ENCODE measurements at regions of chr9 and their contacts with region 1.

Region 1: GRCh38 chr9:72952914-72953313 is at the start of gene ALDH1A1:
- DNase-seq: peak in 1 of 2 experiments; percentile 91
- ATAC-seq: peak; percentile 64 to 65; a peak in 5 of 6 replicates
- H3K4me3 ChIP-seq: peak within 1 kb of the TSS; percentile 67
- H3K27ac ChIP-seq: peak within 1 kb of the TSS; percentile 90 to 91
- H3K4me1 ChIP-seq: peaks cover 23% of the 10 kb centered on the region
- CTCF ChIP-seq: no peak
- EP300 ChIP-seq: no peak; a peak in 1 of 5 replicates
- POLR2A ChIP-seq: peak; percentile 84
- RAD21 ChIP-seq: 0 out of 5 replicates have a peak, but pooled peaks of 1 of the 2 experiments have one; percentile 9
- polyA plus RNA-seq, gene ALDH1A1: 6,119 and 8,617 TPM in 2 replicates

Region 2: GRCh38 chr9:72937545-72937944 is 15.4 kb before region 1 on chr9:
- CTCF ChIA-PET with region 1: interaction called, 9 read pairs
- POLR2A ChIA-PET with region 1: interaction called, 28 read pairs
- DNase-seq: peak in 1 of 2 experiments; percentile 82
- ATAC-seq: peak; percentile 23 to 41; a peak in 4 of 6 replicates
- H3K4me3 ChIP-seq: peak overlapping the region; percentile 67
- H3K27ac ChIP-seq: peak overlapping the region; percentile 90 to 91
- H3K4me1 ChIP-seq: peaks cover 75% of the 10 kb centered on the region
- CTCF ChIP-seq: no peak
- EP300 ChIP-seq: no peak
- POLR2A ChIP-seq: no peak
- RAD21 ChIP-seq: no peak

Region 3: GRCh38 chr9:72978744-72979143 is 25.8 kb after region 1 on chr9:
- CTCF ChIA-PET with region 1: interaction called, 6 read pairs
- POLR2A ChIA-PET with region 1: interaction called, 34 read pairs
- DNase-seq: peak in 1 of 2 experiments; percentile 68
- ATAC-seq: peak in 1 of 2 experiments; percentile 22; a peak in 3 of 6 replicates
- H3K4me3 ChIP-seq: no peak overlapping the region
- H3K27ac ChIP-seq: peak overlapping the region; percentile 96 to 98
- H3K4me1 ChIP-seq: peaks cover 68% of the 10 kb centered on the region
- CTCF ChIP-seq: no peak
- EP300 ChIP-seq: peak; percentile 75 to 89; a peak in 3 of 5 replicates
- POLR2A ChIP-seq: no peak
- RAD21 ChIP-seq: 0 out of 5 replicates have a peak, but pooled peaks of 1 of the 2 experiments have one; percentile 22

Region 4: DNA sequence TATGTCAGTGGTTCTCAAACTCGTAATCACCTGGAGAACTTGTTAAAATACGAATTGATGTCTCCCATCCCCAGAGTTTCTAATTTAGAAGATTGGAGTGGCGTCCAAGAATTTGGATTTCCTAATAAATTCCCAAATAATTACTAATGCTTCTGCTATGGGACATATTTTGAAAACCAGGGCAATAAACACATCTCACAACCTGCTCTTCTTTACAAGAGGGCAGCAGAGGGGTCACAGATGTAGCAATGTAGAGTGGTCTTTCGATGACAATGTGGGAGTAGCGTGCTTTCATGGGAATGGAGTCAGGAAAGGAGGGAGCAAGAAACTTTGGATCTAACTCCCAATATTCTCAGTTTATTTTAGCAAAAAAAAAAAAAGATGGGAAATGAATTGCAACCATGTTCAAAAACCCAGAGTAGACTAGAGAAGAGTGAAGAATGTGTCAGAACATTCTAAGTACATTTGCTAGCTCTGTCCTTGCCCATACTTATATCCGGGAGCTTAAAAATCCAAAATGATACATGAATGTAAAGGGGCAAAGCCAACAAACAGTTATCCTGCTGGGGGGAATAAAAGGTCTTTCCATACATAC is 33.7 kb after region 1 on chr9:
- CTCF ChIA-PET with region 1: interaction called, 10 read pairs
- POLR2A ChIA-PET with region 1: interaction called, 77 read pairs
- DNase-seq: peak in 1 of 2 experiments; percentile 69
- ATAC-seq: no peak
- H3K4me3 ChIP-seq: no peak overlapping the region
- H3K27ac ChIP-seq: peak overlapping the region; percentile 91 to 98
- H3K4me1 ChIP-seq: peaks cover 94% of the 10 kb centered on the region
- CTCF ChIP-seq: no peak
- EP300 ChIP-seq: peak; percentile 65 to 83; a peak in 3 of 5 replicates
- POLR2A ChIP-seq: no peak
- RAD21 ChIP-seq: no peak